Panc1 (cell line): ENCODE measurements at regions of chr19 and their contacts with region 1.

Region 1: GRCh38 chr19:58326914-58327726 is at the start of gene ZSCAN22:
- DNase-seq: peak; percentile 88
- ATAC-seq: peak; percentile 97
- H3K4me3 ChIP-seq: peak within 1 kb of the TSS; percentile 74 to 89
- H3K27ac ChIP-seq: peak within 1 kb of the TSS; percentile 90
- H3K4me1 ChIP-seq: peaks cover 23% of the 10 kb centered on the region
- H3K27me3 ChIP-seq: no peaks in the 10 kb centered on the region
- CTCF ChIP-seq: no peak
- total RNA-seq, gene ZSCAN22: 6.6 TPM

Region 2: GRCh38 chr19:58086825-58087710 is 240.1 kb before region 1 on chr19:
- CTCF ChIA-PET with region 1: no interaction called
- POLR2A ChIA-PET with region 1: no interaction called
- in situ Hi-C with region 1: no loop called
- intact Hi-C with region 1: no loop called
- DNase-seq: no peak
- ATAC-seq: no peak
- H3K4me3 ChIP-seq: no peak overlapping the region
- H3K27ac ChIP-seq: no peak overlapping the region
- H3K4me1 ChIP-seq: no peaks in the 10 kb centered on the region
- H3K27me3 ChIP-seq: no peaks in the 10 kb centered on the region
- CTCF ChIP-seq: no peak

Region 3: GRCh38 chr19:58134244-58134643 is 192.9 kb before region 1 on chr19:
- CTCF ChIA-PET with region 1: no interaction called
- POLR2A ChIA-PET with region 1: no interaction called
- in situ Hi-C with region 1: no loop called
- intact Hi-C with region 1: no loop called
- DNase-seq: no peak
- ATAC-seq: no peak
- H3K4me3 ChIP-seq: no peak overlapping the region
- H3K27ac ChIP-seq: no peak overlapping the region
- H3K4me1 ChIP-seq: no peaks in the 10 kb centered on the region
- H3K27me3 ChIP-seq: no peaks in the 10 kb centered on the region
- CTCF ChIP-seq: no peak

Region 4: GRCh38 chr19:58372311-58373133 is 45.4 kb after region 1 on chr19:
- CTCF ChIA-PET with region 1: no interaction called
- POLR2A ChIA-PET with region 1: no interaction called
- in situ Hi-C with region 1: no loop called
- intact Hi-C with region 1: no loop called
- DNase-seq: no peak
- ATAC-seq: peak; percentile 48; the same call in 1 of the 2 replicates
- H3K4me3 ChIP-seq: no peak overlapping the region
- H3K27ac ChIP-seq: no peak overlapping the region
- H3K4me1 ChIP-seq: no peaks in the 10 kb centered on the region
- H3K27me3 ChIP-seq: no peaks in the 10 kb centered on the region
- CTCF ChIP-seq: no peak

Region 5: DNA sequence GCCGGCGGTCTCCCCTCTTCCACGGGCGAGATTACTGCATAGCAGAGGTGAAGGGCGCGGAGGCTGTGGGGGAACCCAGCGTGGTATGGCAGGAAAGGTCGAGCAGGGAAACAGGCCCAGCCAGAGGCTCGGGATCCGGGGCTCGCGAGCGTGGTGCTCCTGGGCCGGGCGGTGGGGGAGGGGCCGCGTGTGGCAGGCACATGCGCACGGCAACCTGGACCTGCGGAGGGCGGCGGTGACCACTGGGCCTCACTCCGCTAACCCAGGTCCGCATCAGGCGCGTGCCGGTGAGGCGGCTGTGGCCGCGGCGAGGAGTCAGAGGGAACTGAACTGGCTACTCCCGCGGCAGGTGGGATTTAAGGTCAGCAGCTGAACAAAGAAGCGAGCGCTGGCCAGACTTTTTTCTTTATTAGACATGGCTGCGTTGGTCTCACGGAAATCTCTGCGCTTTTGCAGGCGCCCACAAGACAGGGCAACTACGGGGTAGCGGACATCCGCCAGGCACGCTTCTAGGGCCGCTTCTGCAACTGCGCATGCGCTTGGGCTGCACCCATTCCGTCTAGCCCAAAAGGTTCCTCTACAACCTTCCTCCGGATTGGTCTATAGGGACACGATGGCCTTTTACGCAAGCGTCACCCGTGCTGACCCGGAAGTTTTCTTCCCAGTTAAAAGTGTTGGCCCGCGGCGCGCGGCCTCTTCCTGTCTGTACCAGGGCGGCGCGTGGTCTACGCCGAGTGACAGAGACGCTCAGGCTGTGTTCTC is 59.6 kb after region 1 on chr19 and contains the start of gene RPS5:
- CTCF ChIA-PET with region 1: no interaction called
- POLR2A ChIA-PET with region 1: no interaction called
- in situ Hi-C with region 1: no loop called
- intact Hi-C with region 1: loop called (anchors 5 kb)
- DNase-seq: peak; percentile 95
- ATAC-seq: peak; percentile 94
- H3K4me3 ChIP-seq: peak within 1 kb of the TSS; percentile 97 to 98
- H3K27ac ChIP-seq: peak within 1 kb of the TSS; percentile 99
- H3K4me1 ChIP-seq: peaks cover 39% of the 10 kb centered on the region
- H3K27me3 ChIP-seq: no peaks in the 10 kb centered on the region
- CTCF ChIP-seq: no peak
- total RNA-seq, gene RPS5: 1,487 TPM

Region 6: DNA sequence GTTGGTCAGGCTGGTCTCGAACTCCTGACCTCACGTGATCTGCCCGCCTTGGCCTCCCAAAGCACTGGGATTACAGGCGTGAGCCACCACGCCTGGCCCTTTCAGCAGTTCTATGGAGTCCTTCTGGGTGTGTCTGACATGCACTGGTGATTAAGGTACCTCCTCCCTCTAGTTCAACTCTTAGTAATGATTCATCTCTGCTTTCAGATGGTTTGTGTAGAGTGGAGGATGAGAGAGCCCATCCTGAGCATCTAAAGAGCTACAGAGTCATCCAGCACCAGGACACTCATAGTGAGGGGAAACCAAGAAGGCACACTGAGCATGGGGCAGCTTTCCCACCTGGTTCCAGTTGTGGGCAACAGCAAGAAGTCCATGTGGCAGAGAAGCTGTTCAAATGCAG is 89.5 kb after region 1 on chr19:
- CTCF ChIA-PET with region 1: no interaction called
- POLR2A ChIA-PET with region 1: no interaction called
- in situ Hi-C with region 1: no loop called
- intact Hi-C with region 1: no loop called
- DNase-seq: no peak
- ATAC-seq: no peak
- H3K4me3 ChIP-seq: no peak overlapping the region
- H3K27ac ChIP-seq: no peak overlapping the region
- H3K4me1 ChIP-seq: no peaks in the 10 kb centered on the region
- H3K27me3 ChIP-seq: no peaks in the 10 kb centered on the region
- CTCF ChIP-seq: no peak